Gastrocnemius medialis (tissue), 4 donors: ENCODE measurements at regions of chr20 and their contacts with region 1.

Region 1: GRCh38 chr20:58888521-58889333 is 36.2 kb downstream of the GNAS start:
- DNase-seq: peak; percentile 74 to 82
- ATAC-seq: peak; percentile 50 to 51
- H3K4me3 ChIP-seq: peak overlapping the region; percentile 68 to 95 (median 78)
- H3K27ac ChIP-seq: peak overlapping the region; percentile 97 to 100 (median 99)
- H3K4me1 ChIP-seq: peaks cover 12 to 16% of the 10 kb centered on the region in 2 donors
- H3K27me3 ChIP-seq: no peaks in the 10 kb centered on the region
- CTCF ChIP-seq: no peak
- POLR2A ChIP-seq: peak; percentile 97 to 98

Region 2: GRCh38 chr20:57391074-57391554 is 1497.6 kb before region 1 on chr20 and contains the start of gene RBM38:
- in situ Hi-C with region 1: no loop called
- intact Hi-C with region 1: loop called (anchors 10 kb)
- DNase-seq: peak in 1 of 2 donors; percentile 71
- ATAC-seq: peak; percentile 28 to 38
- H3K4me3 ChIP-seq: peak within 1 kb of the TSS; percentile 58 to 82 (median 74)
- H3K27ac ChIP-seq: peak within 1 kb of the TSS; percentile 96 to 99 (median 98)
- H3K4me1 ChIP-seq: peaks cover 53 to 55% of the 10 kb centered on the region in 2 donors
- H3K27me3 ChIP-seq: no peaks in the 10 kb centered on the region
- CTCF ChIP-seq: no peak
- POLR2A ChIP-seq: peak; percentile 46 to 71
- total RNA-seq, gene RBM38: 56.7 to 229 (median 177) TPM

Region 3: GRCh38 chr20:58407966-58408557 is 480.7 kb before region 1 on chr20:
- in situ Hi-C with region 1: no loop called
- intact Hi-C with region 1: loop called (anchors 10 kb)
- DNase-seq: peak; percentile 59 to 69
- ATAC-seq: peak; percentile 98 to 99
- H3K4me3 ChIP-seq: peak overlapping the region; percentile 8 to 28 (median 16)
- H3K27ac ChIP-seq: peak overlapping the region; percentile 80 to 81 (median 80)
- H3K4me1 ChIP-seq: peaks cover 64 to 76% of the 10 kb centered on the region in 2 donors
- H3K27me3 ChIP-seq: no peaks in the 10 kb centered on the region
- CTCF ChIP-seq: no peak
- POLR2A ChIP-seq: no peak

Region 4: GRCh38 chr20:58524814-58525213 is 363.9 kb before region 1 on chr20:
- in situ Hi-C with region 1: no loop called
- intact Hi-C with region 1: no loop called
- DNase-seq: no peak
- ATAC-seq: no peak
- H3K4me3 ChIP-seq: no peak overlapping the region
- H3K27ac ChIP-seq: no peak overlapping the region
- H3K4me1 ChIP-seq: no peaks in the 10 kb centered on the region
- H3K27me3 ChIP-seq: no peaks in the 10 kb centered on the region
- CTCF ChIP-seq: no peak
- POLR2A ChIP-seq: no peak

Region 5: DNA sequence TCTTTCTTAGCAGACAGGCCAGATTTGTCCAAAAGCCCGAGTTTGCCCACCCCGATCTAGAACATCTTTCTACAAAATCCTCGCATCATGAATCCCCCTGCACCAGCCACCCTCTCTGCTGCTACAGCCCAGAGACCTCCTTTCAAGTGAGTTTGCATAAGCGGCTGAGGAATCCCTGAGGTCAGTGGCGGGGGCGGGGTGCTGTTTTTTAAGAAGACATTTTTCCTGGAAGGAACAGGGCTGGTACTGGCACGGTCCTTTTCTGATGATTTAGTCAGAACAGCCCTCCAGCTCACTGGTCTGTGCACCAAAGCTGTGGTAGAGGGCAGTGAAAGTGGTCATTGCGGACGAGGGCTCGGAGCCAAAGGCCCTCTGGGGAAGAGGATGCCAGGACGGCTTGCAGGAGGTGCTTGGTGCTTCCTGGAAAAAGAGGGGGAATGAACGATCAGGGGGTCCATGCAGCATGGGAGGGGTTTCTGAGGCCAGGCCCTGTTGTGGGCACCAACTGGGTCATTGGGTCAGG is 88.5 kb before region 1 on chr20:
- in situ Hi-C with region 1: no loop called
- intact Hi-C with region 1: no loop called
- DNase-seq: no peak
- ATAC-seq: no peak
- H3K4me3 ChIP-seq: no peak overlapping the region
- H3K27ac ChIP-seq: no peak overlapping the region
- H3K4me1 ChIP-seq: no peaks in the 10 kb centered on the region
- H3K27me3 ChIP-seq: peaks cover 0 to 4% (median 0%) of the 10 kb centered on the region in 3 donors
- CTCF ChIP-seq: no peak
- POLR2A ChIP-seq: no peak

Region 6: GRCh38 chr20:58980700-58981627 is 92.2 kb after region 1 on chr20 and contains the start of gene NELFCD:
- in situ Hi-C with region 1: loop called in 3 of 4 experiments (anchors 10 to 25 kb)
- intact Hi-C with region 1: loop called (anchors 1 kb)
- DNase-seq: peak; percentile 72 to 82
- ATAC-seq: peak; percentile 89 to 92
- H3K4me3 ChIP-seq: peak within 1 kb of the TSS; percentile 90 to 100 (median 95)
- H3K27ac ChIP-seq: peak within 1 kb of the TSS; percentile 83 to 92 (median 90)
- H3K4me1 ChIP-seq: peaks cover 32 to 38% of the 10 kb centered on the region in 2 donors
- H3K27me3 ChIP-seq: no peaks in the 10 kb centered on the region
- CTCF ChIP-seq: no peak
- POLR2A ChIP-seq: peak; percentile 80
- total RNA-seq, gene NELFCD: 37.8 to 44.3 (median 40.9) TPM

Region 7: DNA sequence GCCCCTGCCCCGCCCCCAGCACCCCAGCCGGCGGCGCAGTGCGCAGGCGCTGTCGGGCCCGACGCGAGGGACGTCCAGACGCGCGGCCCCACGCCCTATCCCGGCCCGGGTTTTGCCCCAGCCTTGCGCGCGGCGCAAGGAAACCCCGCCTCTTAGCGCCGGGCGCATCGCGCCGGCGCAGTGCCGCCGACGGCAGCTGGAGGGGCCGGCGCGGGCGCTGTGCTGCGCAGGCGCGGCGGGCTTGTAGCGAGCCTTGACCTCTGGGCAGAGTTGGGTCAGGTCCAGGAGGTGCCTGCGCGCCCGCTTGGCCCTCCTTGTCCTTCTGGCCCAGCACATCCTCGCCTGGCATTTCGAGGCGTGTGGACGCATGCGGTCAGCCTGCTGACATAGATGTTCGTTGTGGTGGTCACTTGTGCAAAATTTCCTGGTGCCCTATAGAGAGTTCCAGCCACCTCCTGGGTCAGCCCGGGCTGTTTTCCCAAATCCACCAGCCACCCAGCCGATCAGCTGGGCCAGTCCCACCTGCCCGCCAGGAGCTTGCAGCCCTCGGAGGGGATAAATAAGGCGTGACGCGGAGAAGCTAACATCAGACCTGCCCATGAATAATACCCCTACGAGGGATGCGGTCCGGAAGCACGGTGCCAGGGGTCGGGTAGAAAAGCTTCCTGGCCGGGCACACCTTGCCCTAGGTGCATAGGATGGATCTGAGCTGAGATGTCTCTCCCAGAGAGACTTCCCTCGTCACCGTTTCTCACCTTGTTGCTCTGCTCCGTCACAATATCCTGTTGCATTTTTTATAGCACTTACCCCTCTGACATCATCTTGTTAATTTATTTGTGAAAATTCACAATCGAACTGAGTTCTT is 154.3 kb after region 1 on chr20:
- in situ Hi-C with region 1: loop called in 1 of 4 experiments (anchors 10 kb)
- intact Hi-C with region 1: no loop called
- DNase-seq: peak; percentile 85 to 92
- ATAC-seq: peak; percentile 91 to 97
- H3K4me3 ChIP-seq: peak overlapping the region; percentile 83 to 96 (median 86)
- H3K27ac ChIP-seq: peak overlapping the region; percentile 84 to 92 (median 90)
- H3K4me1 ChIP-seq: peaks cover 28 to 30% of the 10 kb centered on the region in 2 donors
- H3K27me3 ChIP-seq: no peaks in the 10 kb centered on the region
- CTCF ChIP-seq: peak in 2 of 5 experiments; percentile 12 to 41
- POLR2A ChIP-seq: no peak